ENCODE measurements at regions of chr13 and their contacts with region 1.

Region 1: DNA sequence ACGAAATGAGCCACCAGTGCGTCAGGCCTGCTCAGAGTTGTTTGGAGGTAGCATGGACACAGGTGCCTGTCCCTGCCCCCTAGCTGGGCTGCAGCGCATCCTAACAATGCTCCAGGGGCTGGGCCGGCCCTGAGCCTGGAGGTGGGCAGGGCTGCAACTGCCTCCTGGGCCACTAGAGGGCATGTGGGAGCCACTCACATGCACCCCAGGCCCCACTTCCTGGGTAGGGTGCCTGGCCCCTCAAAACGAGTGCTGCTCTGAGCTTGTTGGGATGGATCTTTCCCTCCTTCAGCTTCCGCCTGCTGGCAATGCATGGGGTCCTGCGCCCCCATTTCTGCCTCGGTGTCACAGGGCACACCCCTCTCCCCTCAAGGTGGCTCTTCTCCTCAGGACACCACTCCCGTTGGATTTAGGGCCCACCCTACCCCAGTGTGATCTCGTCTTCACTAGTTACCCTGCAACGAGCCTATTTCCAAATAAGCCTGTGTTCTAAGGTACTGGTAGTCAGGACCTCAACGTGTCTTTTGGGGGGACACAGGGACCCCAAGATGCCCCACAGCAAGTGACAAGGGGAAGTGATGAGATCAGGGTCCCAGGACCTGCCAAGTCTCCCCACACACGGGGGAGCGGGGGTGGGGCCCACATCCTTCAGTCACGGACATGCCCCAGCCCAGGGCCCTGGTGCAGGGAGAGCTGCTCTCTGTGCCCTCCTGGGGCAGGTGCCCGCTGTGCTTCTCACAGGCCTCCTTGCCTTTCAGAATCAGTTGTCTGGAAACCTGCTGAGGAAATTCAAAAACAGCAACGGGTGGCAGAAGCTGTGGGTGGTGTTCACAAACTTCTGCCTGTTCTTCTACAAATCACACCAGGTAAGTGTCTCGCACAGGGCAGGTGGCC is 131.3 kb downstream of the STK24 start:
- DNase-seq: peak; percentile 62 to 88 (median 81)
- ATAC-seq: peak; percentile 99
- H3K4me3 ChIP-seq: peak overlapping the region; percentile 0 to 32
- H3K4me3 Mint-ChIP-seq: peak overlapping the region; percentile 55
- H3K27ac ChIP-seq: peak overlapping the region in 1 of 2 experiments; percentile 51
- H3K27ac Mint-ChIP-seq: peak overlapping the region; percentile 92
- H3K4me1 ChIP-seq: peaks cover 18% of the 10 kb centered on the region
- H3K4me1 Mint-ChIP-seq: peaks cover 19% of the 10 kb centered on the region
- H3K27me3 ChIP-seq: no peaks in the 10 kb centered on the region
- H3K27me3 Mint-ChIP-seq: no peaks in the 10 kb centered on the region
- CTCF ChIP-seq: peak; percentile 92

Region 2: GRCh38 chr13:98466634-98467236 is 21.1 kb after region 1 on chr13:
- CTCF ChIA-PET with region 1: interaction called, 16 read pairs
- POLR2A ChIA-PET with region 1: no interaction called
- intact Hi-C with region 1: no loop called
- DNase-seq: peak in 5 of 9 experiments; percentile 31 to 47 (median 41)
- ATAC-seq: peak; percentile 66
- H3K4me3 ChIP-seq: no peak overlapping the region
- H3K4me3 Mint-ChIP-seq: no peak overlapping the region
- H3K27ac ChIP-seq: no peak overlapping the region
- H3K27ac Mint-ChIP-seq: peak overlapping the region; percentile 14
- H3K4me1 ChIP-seq: no peaks in the 10 kb centered on the region
- H3K4me1 Mint-ChIP-seq: peaks cover 12% of the 10 kb centered on the region
- H3K27me3 ChIP-seq: no peaks in the 10 kb centered on the region
- H3K27me3 Mint-ChIP-seq: no peaks in the 10 kb centered on the region
- CTCF ChIP-seq: no peak

Region 3: GRCh38 chr13:98476538-98476966 is 31.0 kb after region 1 on chr13:
- CTCF ChIA-PET with region 1: interaction called, 16 read pairs
- POLR2A ChIA-PET with region 1: interaction called, 4 read pairs
- intact Hi-C with region 1: loop called in 1 of 2 experiments (anchors 1 kb)
- DNase-seq: peak; percentile 57 to 95 (median 87)
- ATAC-seq: peak; percentile 90
- H3K4me3 ChIP-seq: peak overlapping the region in 1 of 2 experiments; percentile 20
- H3K4me3 Mint-ChIP-seq: peak overlapping the region; percentile 67
- H3K27ac ChIP-seq: peak overlapping the region; percentile 44 to 58
- H3K27ac Mint-ChIP-seq: peak overlapping the region; percentile 94
- H3K4me1 ChIP-seq: peaks cover 44% of the 10 kb centered on the region
- H3K4me1 Mint-ChIP-seq: peaks cover 66% of the 10 kb centered on the region
- H3K27me3 ChIP-seq: no peaks in the 10 kb centered on the region
- H3K27me3 Mint-ChIP-seq: no peaks in the 10 kb centered on the region
- CTCF ChIP-seq: no peak

Region 4: GRCh38 chr13:98565726-98566565 is 120.4 kb after region 1 on chr13:
- CTCF ChIA-PET with region 1: interaction called, 14 read pairs
- POLR2A ChIA-PET with region 1: interaction called, 3 read pairs
- intact Hi-C with region 1: loop called in 1 of 2 experiments (anchors 10 kb)
- DNase-seq: no peak
- ATAC-seq: no peak
- H3K4me3 ChIP-seq: no peak overlapping the region
- H3K4me3 Mint-ChIP-seq: peak overlapping the region; percentile 73
- H3K27ac ChIP-seq: peak overlapping the region in 1 of 2 experiments; percentile 39
- H3K27ac Mint-ChIP-seq: peak overlapping the region; percentile 97
- H3K4me1 ChIP-seq: peaks cover 79% of the 10 kb centered on the region
- H3K4me1 Mint-ChIP-seq: peaks cover 87% of the 10 kb centered on the region
- H3K27me3 ChIP-seq: no peaks in the 10 kb centered on the region
- H3K27me3 Mint-ChIP-seq: no peaks in the 10 kb centered on the region
- CTCF ChIP-seq: no peak

Region 5: DNA sequence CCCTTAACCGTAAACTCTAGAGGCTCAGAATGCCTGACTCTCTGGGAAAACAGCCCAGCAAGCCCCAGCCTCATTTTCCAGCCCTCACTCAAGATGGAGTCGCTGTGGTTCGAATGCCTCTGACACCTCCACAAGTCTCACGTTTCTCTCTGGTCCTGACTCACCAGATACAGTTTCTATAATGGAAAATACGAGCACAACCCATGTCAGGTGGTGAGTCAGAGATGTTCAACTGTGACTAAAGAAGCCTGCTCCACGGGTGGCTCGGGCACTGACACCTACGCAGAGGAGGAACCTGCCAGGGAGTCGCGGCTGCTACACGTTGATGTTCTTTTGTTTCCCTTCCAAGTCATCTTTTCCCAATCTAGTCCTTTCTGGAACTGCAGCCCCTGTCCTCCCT is 218.5 kb after region 1 on chr13:
- CTCF ChIA-PET with region 1: interaction called, 16 read pairs
- POLR2A ChIA-PET with region 1: interaction called, 3 read pairs
- intact Hi-C with region 1: no loop called
- DNase-seq: no peak
- ATAC-seq: no peak
- H3K4me3 ChIP-seq: no peak overlapping the region
- H3K4me3 Mint-ChIP-seq: no peak overlapping the region
- H3K27ac ChIP-seq: no peak overlapping the region
- H3K27ac Mint-ChIP-seq: no peak overlapping the region
- H3K4me1 ChIP-seq: no peaks in the 10 kb centered on the region
- H3K4me1 Mint-ChIP-seq: no peaks in the 10 kb centered on the region
- H3K27me3 ChIP-seq: no peaks in the 10 kb centered on the region
- H3K27me3 Mint-ChIP-seq: no peaks in the 10 kb centered on the region
- CTCF ChIP-seq: no peak

Region 6: DNA sequence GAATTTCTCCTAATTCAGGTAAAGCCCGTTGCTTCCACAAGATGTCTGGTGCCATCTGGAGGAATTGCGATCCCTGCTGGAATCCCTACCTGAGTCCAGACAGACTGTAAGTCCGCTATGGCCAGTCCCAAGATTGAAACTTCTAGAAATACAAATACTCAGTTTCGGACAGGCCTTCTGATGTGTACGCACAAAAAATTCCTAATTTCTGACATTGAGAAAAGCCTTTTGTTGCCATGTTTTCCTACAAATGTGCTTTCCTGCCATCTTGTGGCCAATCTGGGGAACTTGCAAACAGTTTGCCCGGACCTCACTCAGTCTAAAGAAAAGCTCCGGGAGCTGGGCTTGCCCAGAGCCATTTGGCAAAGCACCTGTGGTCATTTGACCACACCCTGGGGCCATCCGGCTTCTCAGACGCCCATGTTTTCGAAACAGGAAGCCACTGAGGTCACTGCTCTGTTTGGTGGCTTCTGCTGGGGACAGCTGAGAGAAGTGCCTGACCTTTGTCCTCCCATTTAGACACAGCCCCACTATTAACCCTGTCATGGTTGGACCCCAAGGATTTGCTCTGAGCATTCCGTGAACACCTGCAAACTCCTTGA is 227.5 kb after region 1 on chr13:
- CTCF ChIA-PET with region 1: interaction called, 52 read pairs
- POLR2A ChIA-PET with region 1: interaction called, 3 read pairs
- intact Hi-C with region 1: loop called (anchors 1 kb)
- DNase-seq: peak in 8 of 9 experiments; percentile 19 to 66 (median 44)
- ATAC-seq: peak; percentile 44
- H3K4me3 ChIP-seq: no peak overlapping the region
- H3K4me3 Mint-ChIP-seq: no peak overlapping the region
- H3K27ac ChIP-seq: no peak overlapping the region
- H3K27ac Mint-ChIP-seq: no peak overlapping the region
- H3K4me1 ChIP-seq: peaks cover 3% of the 10 kb centered on the region
- H3K4me1 Mint-ChIP-seq: no peaks in the 10 kb centered on the region
- H3K27me3 ChIP-seq: no peaks in the 10 kb centered on the region
- H3K27me3 Mint-ChIP-seq: no peaks in the 10 kb centered on the region
- CTCF ChIP-seq: peak; percentile 81

Region 7: DNA sequence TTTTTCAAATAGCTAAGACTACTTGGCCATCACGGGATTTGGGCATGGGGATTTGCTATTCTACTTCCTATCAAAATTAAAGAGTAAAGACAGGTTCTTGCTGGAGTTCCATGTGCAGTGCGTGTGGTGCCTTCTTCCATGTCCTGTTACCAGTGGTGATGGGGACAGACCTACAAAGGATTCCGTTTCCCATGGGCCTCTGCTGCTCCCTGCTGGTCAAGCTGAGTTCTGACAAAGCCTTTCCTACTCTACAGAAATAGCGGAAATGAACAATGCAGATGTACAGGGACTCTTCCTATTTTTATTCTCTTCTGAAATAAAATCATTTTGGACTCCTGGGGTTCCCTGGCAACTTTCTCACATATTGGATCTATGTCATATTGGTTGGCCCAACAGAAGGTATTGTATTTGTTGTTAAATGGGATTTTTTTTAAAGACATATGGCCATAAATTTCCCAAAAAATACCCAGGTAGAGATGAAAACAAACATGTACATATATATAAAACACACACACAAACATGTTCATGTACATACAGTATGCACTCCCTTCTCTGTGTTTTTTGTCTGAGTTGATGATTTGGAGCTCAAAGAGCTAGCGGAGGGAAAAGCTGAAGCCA is 397.4 kb after region 1 on chr13:
- CTCF ChIA-PET with region 1: interaction called, 6 read pairs
- POLR2A ChIA-PET with region 1: no interaction called
- intact Hi-C with region 1: loop called (anchors 2 to 5 kb)
- DNase-seq: peak; percentile 19 to 68 (median 57)
- ATAC-seq: peak; percentile 82
- H3K4me3 ChIP-seq: no peak overlapping the region
- H3K4me3 Mint-ChIP-seq: no peak overlapping the region
- H3K27ac ChIP-seq: no peak overlapping the region
- H3K27ac Mint-ChIP-seq: no peak overlapping the region
- H3K4me1 ChIP-seq: no peaks in the 10 kb centered on the region
- H3K4me1 Mint-ChIP-seq: peaks cover 2% of the 10 kb centered on the region
- H3K27me3 ChIP-seq: no peaks in the 10 kb centered on the region
- H3K27me3 Mint-ChIP-seq: no peaks in the 10 kb centered on the region
- CTCF ChIP-seq: peak; percentile 80

Measured in CD8-positive, alpha-beta T cell (primary cell).